HEK293T (cell line): ENCODE measurements at regions of chr11 and their contacts with region 1.

Region 1: GRCh38 chr11:17077520-17078401 is at the start of gene RPS13:
- DNase-seq: peak; percentile 98

Region 2: GRCh38 chr11:17098038-17098437 is 20.3 kb after region 1 on chr11:
- CTCF ChIA-PET with region 1: no interaction called
- POLR2A ChIA-PET with region 1: interaction called, 15 read pairs
- DNase-seq: no peak

Region 3: DNA sequence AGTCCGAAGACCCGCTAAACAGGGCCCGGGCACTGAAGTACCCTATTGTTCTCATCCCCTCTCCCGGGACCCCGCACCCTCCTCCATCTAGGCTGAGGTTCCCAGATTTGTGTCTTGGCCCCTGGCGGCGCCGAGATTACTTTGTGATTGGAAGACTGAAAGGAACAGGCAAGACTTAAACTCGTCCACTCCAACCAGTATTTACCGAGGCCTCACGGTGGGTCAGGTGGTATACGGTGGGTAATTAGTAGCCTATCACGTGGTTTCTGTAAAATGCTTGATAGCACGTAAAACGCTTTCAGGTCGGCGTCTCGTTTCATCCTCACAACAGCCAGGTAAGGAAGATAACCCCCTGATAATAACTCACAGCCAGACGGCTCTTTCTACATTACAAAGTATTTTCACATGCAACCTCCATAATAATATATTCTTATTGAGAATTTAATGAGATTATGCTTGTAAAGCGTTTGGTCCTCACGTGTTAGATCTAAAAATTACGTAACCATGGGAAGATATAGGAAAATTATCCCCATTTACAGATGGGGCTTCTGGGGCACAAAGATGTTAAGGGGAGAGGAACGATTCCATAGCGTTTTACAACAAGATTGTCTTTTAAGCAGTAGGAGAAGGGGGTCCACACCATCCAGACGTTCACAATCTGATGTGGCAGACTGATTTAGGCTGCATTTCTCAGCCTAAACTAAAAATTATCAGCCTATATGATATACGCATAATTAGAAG is 130.7 kb after region 1 on chr11:
- CTCF ChIA-PET with region 1: no interaction called
- POLR2A ChIA-PET with region 1: no interaction called
- DNase-seq: peak; percentile 78